AG04449 (cell line): ENCODE measurements at regions of chr17 and their contacts with region 1.

Region 1: GRCh38 chr17:37671824-37672547 is 28.7 kb upstream of the DDX52 start:
- DNase-seq: peak; percentile 88
- H3K4me3 ChIP-seq: no peak overlapping the region
- CTCF ChIP-seq: no peak

Region 2: DNA sequence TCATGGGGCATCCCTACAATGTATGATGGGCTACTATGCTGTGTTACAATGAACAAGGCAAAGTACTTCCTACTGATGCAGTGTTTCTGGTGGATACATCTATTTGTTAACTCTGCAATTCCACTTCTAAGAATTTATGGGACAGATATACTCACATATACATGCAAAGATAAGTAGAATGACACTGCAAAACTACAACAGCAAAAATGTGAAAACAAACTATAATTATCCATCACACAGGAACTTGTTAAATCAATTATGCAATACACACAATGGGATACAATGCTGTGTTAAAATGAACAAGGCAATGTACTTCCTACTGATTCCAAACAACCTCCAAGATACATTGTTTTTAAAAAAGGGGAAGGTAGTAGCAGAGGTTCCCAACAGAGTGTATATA is 32.0 kb before region 1 on chr17:
- CTCF ChIA-PET with region 1: no interaction called
- POLR2A ChIA-PET with region 1: no interaction called
- DNase-seq: no peak
- H3K4me3 ChIP-seq: no peak overlapping the region
- CTCF ChIP-seq: no peak

Region 3: GRCh38 chr17:37701496-37701898 is 29.5 kb after region 1 on chr17:
- CTCF ChIA-PET with region 1: interaction called, 16 read pairs
- POLR2A ChIA-PET with region 1: no interaction called
- DNase-seq: no peak
- H3K4me3 ChIP-seq: no peak overlapping the region
- CTCF ChIP-seq: peak; percentile 32

Region 4: GRCh38 chr17:37859451-37859850 is 187.5 kb after region 1 on chr17:
- CTCF ChIA-PET with region 1: no interaction called
- POLR2A ChIA-PET with region 1: no interaction called
- DNase-seq: no peak
- H3K4me3 ChIP-seq: no peak overlapping the region
- CTCF ChIP-seq: no peak